Endothelial cell of umbilical vein (primary cell): ENCODE measurements at regions of chr3 and their contacts with region 1.

Region 1: GRCh38 chr3:7876741-7877297 is 624.8 kb upstream of the LMCD1 start:
- DNase-seq: peak; percentile 92
- H3K4me3 ChIP-seq: peak overlapping the region in 1 of 3 experiments; percentile 1
- H3K27ac ChIP-seq: peak overlapping the region; percentile 76
- H3K4me1 ChIP-seq: peaks cover 40% of the 10 kb centered on the region
- H3K27me3 ChIP-seq: no peaks in the 10 kb centered on the region
- CTCF ChIP-seq: no peak
- POLR2A ChIP-seq: peak; percentile 41

Region 2: DNA sequence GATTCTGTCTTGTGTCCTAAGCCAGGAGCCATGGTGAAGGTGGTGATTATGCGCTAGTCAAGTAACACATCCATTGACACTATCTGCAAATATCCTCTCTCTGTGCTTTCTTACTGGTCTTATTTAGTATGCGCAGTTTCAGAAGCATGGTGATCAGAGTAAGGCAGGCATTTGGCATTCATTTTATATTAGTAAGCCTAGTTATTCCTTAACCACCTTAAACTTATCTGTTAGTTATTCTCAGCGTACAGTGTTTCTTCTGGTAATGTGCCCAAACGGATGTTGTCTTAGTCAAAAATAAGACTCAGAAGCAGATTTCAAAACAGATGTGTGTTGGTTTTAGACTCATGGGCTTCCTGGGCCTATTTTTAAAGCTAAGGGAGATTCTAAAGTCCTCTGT is 686.7 kb before region 1 on chr3:
- CTCF ChIA-PET with region 1: no interaction called
- POLR2A ChIA-PET with region 1: no interaction called
- dilution Hi-C with region 1: no loop called
- intact Hi-C with region 1: loop called (anchors 10 kb)
- DNase-seq: peak; percentile 59
- H3K4me3 ChIP-seq: no peak overlapping the region
- H3K27ac ChIP-seq: no peak overlapping the region
- H3K4me1 ChIP-seq: peaks cover 2% of the 10 kb centered on the region
- H3K27me3 ChIP-seq: no peaks in the 10 kb centered on the region
- CTCF ChIP-seq: no peak
- POLR2A ChIP-seq: no peak

Region 3: DNA sequence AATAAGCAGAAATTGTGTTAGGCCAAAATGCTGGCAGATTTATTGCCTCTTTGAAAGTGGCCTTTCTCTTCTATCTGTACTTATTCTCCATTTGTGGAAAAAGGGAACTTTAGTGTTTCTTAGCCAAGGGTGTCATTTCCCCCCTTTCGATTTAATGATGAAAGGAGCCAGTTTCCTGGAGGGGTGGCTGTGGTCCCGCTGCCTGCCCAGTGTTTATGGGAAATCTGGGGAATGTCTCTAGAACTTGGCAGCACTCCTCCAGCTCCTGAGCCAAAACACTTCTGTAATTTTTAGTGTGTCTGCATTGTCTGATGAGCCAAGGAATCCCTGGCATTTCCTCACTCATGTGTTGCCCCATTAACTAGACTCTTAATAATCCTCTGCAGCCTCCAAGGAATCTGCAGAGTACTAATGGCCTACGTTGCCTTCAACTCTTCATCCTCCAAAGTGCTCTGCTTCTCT is 567.1 kb before region 1 on chr3:
- CTCF ChIA-PET with region 1: no interaction called
- POLR2A ChIA-PET with region 1: no interaction called
- dilution Hi-C with region 1: no loop called
- intact Hi-C with region 1: loop called (anchors 1 kb)
- DNase-seq: peak; percentile 98
- H3K4me3 ChIP-seq: no peak overlapping the region
- H3K27ac ChIP-seq: peak overlapping the region; percentile 96
- H3K4me1 ChIP-seq: peaks cover 55% of the 10 kb centered on the region
- H3K27me3 ChIP-seq: no peaks in the 10 kb centered on the region
- CTCF ChIP-seq: no peak
- POLR2A ChIP-seq: no peak

Region 4: DNA sequence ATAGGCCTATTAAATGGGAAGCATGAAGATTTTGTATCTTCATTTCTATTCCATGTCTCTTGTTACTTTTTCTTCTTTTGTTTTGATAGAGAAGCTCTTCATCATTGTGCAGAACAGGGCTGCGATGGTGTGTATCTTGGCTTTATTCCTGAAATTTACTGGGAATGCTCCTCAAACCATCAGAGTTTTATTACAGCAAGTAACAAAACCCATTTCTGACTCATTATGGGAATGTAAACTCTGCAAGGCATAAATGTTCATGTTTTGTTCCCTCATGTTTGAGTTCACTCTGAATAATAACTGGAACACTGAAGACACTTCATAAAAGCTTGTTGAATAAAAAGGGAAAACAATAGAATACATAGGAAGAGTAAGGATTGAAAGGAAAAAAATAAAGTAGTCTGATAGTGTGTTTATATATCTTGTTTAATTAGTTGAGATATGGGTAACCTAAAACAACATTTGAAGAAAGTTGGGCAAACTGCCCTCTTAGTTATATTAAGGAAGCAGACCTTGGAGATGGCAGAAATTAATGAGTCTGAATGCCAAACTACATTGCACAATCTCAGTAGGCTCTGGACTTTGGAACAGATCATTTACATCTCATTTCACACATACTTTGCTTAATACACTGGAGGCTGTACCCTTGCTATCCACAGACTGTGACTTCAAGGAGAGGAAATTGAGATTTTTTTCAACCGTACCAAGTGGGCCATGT is 494.4 kb before region 1 on chr3:
- CTCF ChIA-PET with region 1: no interaction called
- POLR2A ChIA-PET with region 1: no interaction called
- dilution Hi-C with region 1: no loop called
- intact Hi-C with region 1: loop called (anchors 5 kb)
- DNase-seq: peak; percentile 98
- H3K4me3 ChIP-seq: no peak overlapping the region
- H3K27ac ChIP-seq: peak overlapping the region; percentile 57
- H3K4me1 ChIP-seq: peaks cover 18% of the 10 kb centered on the region
- H3K27me3 ChIP-seq: no peaks in the 10 kb centered on the region
- CTCF ChIP-seq: no peak
- POLR2A ChIP-seq: no peak

Region 5: GRCh38 chr3:7682822-7683229 is 194.0 kb before region 1 on chr3:
- CTCF ChIA-PET with region 1: no interaction called
- POLR2A ChIA-PET with region 1: no interaction called
- dilution Hi-C with region 1: no loop called
- intact Hi-C with region 1: loop called (anchors 1 kb)
- DNase-seq: peak; percentile 97
- H3K4me3 ChIP-seq: no peak overlapping the region
- H3K27ac ChIP-seq: peak overlapping the region; percentile 67
- H3K4me1 ChIP-seq: peaks cover 21% of the 10 kb centered on the region
- H3K27me3 ChIP-seq: no peaks in the 10 kb centered on the region
- CTCF ChIP-seq: no peak
- POLR2A ChIP-seq: no peak

Region 6: DNA sequence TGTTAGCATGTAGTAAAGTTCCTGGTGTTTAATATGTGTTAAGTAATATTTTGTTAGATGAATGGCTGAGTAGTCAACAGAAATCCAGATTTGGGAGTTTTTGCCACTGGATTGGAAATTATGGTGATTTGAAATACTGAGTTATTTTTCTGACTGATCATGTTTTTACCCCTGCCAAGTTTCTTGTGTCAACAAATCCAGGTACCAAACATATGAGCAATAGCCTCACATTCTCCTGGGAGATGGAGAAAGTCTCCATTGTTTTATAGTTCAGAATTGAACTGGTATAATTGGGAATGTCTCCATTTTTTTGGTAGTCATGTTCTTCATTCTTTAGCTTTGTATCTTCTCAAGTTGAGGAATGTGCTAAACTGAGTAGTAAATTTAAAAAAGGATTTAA is 142.4 kb before region 1 on chr3:
- CTCF ChIA-PET with region 1: no interaction called
- POLR2A ChIA-PET with region 1: no interaction called
- dilution Hi-C with region 1: no loop called
- intact Hi-C with region 1: loop called (anchors 1 kb)
- DNase-seq: peak; percentile 71
- H3K4me3 ChIP-seq: no peak overlapping the region
- H3K27ac ChIP-seq: peak overlapping the region; percentile 85
- H3K4me1 ChIP-seq: peaks cover 33% of the 10 kb centered on the region
- H3K27me3 ChIP-seq: no peaks in the 10 kb centered on the region
- CTCF ChIP-seq: no peak
- POLR2A ChIP-seq: no peak

Region 7: DNA sequence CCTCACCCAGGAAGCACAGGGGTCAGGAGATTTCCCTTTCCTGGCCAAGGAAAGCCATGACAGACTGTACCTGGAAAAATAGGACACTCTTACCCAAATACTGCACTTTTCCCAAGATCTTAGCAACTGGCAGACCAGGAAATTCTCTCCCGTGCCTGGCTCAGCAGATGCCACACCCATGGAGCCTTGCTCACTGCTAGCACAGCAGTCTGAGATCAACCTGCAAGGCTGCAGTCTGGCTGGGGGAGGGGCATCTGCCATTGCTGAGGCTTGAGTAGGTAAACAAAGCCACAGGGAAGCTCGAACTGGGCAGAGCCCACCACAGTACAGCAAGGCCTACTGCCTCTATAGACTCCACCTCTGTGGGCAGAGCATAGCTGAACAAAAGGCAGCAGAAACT is 57.5 kb after region 1 on chr3:
- CTCF ChIA-PET with region 1: no interaction called
- POLR2A ChIA-PET with region 1: no interaction called
- dilution Hi-C with region 1: no loop called
- intact Hi-C with region 1: no loop called
- DNase-seq: no peak
- H3K4me3 ChIP-seq: no peak overlapping the region
- H3K27ac ChIP-seq: no peak overlapping the region
- H3K4me1 ChIP-seq: no peaks in the 10 kb centered on the region
- H3K27me3 ChIP-seq: no peaks in the 10 kb centered on the region
- CTCF ChIP-seq: no peak
- POLR2A ChIP-seq: no peak